ENCODE measurements at regions of chr1 and their contacts with region 1.

Region 1: DNA sequence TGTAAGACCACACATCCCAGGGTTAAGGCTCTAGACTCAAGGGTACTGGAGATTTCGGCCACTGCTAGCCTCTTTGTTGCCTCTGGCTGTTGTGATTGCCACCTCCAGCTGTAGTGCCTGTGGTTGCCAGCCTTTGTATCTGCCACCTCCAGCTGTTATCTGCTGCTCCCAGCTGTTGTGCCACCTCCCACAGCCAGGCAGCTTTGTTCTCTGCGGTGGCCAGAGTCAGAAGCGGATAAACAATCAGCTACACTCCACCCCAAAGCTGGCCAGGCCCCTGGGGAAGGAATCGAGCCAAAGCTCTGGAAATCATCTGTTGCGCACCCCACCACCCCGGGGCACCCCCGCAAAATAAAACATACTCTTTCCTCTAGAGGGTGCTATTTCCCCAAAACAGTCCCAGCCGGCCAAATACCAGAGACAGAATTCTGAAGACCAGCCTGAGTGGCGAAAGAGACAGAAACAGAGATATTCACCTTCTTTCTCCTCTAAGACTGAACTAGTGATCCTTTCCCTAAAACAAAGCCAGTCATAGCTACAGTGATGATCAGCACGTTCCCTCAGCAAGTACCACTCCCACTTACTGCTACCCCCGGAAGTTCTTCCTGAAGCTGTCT is 14.8 kb upstream of the PIGM start:
- DNase-seq: peak; percentile 82
- CTCF ChIP-seq: peak; percentile 67

Region 2: GRCh38 chr1:159999204-159999603 is 47.4 kb before region 1 on chr1:
- CTCF ChIA-PET with region 1: no interaction called
- POLR2A ChIA-PET with region 1: no interaction called
- DNase-seq: no peak
- CTCF ChIP-seq: no peak

Region 3: DNA sequence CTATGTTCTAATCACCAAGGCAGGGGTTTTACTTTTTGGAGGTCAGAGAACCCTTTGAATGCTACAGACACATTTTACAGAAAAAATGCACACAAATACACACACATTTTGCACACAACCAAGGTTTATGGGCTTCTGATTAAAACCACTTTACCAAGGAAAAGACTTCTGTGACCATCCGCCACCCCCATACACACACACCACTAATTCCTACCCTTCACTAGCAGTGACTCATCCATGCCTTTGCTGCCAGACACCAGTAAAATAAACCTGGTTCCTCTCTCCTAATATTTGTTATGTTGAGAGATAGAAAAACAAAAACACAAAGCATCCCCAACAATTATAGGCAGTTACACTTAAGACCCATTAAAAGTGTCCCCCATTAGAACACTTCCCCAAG is 27.7 kb before region 1 on chr1:
- CTCF ChIA-PET with region 1: interaction called, 11 read pairs
- POLR2A ChIA-PET with region 1: no interaction called
- DNase-seq: no peak
- CTCF ChIP-seq: no peak

Region 4: DNA sequence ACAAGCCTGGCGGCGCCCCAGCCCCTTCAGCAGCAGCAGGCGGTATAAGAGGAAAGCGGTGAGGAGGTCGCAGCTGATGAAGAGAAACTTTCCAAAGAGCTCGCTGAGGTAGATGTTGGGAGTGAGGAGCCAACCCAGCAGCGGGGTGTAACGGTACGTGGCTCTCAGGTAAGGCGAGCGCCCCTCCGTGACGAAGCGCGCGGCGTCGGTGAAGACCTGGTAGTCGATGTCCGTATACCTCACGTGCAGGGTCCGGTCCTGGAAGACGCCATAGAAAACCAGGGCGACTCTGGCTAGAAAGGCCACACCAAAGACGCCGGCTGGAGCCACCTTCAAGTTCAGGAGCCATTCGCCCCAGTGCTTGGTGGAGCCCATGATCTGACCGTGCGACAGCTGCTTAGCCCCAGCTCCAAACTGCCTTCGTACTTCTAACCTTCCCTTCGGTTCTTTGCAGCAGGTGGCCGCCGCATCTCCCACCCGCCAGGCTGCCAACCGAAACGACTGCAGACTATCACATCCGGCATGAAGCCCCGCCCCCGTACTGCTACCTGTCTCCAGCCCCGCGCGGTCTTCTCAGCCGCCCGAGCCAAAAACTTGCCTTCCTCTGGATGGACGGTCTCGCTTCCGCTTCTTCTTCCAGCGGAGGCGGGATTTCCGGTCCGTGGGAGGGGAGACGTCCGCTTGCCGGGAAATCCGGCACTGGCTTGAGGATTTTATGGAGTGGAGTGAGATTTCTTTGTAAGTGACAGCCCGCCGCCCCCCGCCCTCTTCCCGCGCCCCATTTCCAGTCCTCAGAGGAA is 15.0 kb before region 1 on chr1 and contains the start of gene PIGM:
- CTCF ChIA-PET with region 1: interaction called, 48 read pairs
- POLR2A ChIA-PET with region 1: no interaction called
- DNase-seq: peak; percentile 93
- CTCF ChIP-seq: no peak

Region 5: DNA sequence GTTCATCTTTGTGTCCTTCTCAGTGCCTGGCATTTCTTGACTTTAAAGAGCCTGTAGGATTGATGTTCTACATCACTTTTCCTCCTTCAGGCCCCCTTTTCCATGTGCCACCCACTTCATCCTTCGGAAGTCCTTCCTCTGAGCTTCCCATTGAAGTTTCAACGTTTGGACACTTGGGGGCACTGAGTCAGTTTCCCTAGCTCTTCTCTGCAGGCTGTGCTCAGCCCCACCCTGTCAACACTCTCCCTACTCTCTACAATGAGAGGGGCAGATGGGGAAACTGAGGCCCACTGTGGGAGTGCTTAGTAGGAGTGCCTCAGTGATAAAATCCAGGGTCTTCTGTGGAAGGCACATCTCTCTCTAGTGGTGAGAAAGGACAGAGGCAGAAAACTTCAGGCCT is 11.5 kb after region 1 on chr1:
- CTCF ChIA-PET with region 1: interaction called, 50 read pairs
- POLR2A ChIA-PET with region 1: no interaction called
- DNase-seq: no peak
- CTCF ChIP-seq: peak; percentile 18

Region 6: GRCh38 chr1:160069460-160070231 is 23.0 kb after region 1 on chr1 and contains the start of gene KCNJ10:
- CTCF ChIA-PET with region 1: interaction called, 983 read pairs
- POLR2A ChIA-PET with region 1: no interaction called
- DNase-seq: no peak
- CTCF ChIP-seq: no peak

Region 7: DNA sequence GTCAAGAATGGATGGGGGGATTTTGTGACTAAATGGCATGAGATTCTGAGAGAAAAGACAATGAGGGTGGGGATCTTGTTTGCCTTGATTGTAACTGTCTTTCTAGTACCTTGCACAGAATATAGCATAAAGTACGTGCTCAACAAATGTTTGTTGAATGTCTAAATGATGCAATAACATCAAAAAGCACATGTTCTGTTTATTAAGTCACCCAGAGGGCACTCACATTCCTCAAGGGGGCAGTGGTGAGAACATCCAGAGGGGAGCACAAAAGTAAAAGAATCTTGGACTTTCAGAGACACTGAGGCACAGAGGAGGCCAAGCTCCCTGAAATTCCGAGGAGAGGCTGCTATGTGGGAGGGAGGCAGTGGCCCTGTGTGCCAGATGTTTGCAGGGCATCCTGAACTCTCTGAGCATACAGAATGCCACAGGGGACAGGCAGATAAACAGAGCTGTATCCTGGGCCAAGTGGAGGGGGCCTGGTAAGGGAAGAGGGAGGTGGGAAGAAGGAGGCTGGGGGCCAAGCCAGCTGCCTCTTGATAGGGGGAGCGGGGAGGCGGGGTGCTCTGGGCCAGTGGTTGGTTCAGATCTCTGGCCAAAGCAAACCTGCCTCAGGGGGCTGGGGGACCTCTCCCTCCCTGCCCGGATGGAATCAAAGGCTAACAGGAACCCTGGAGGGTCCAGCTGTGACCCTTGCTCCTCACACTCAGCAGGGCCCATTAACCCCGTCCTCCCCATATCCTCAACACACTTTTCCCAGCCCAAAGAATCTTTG is 62.5 kb after region 1 on chr1:
- CTCF ChIA-PET with region 1: no interaction called
- POLR2A ChIA-PET with region 1: no interaction called
- DNase-seq: peak; percentile 60
- CTCF ChIP-seq: peak; percentile 35

Region 8: GRCh38 chr1:160161965-160162705 is 115.5 kb after region 1 on chr1:
- CTCF ChIA-PET with region 1: no interaction called
- POLR2A ChIA-PET with region 1: no interaction called
- DNase-seq: peak; percentile 41
- CTCF ChIP-seq: peak; percentile 46

Region 9: GRCh38 chr1:160460683-160461287 is 414.2 kb after region 1 on chr1:
- CTCF ChIA-PET with region 1: no interaction called
- POLR2A ChIA-PET with region 1: no interaction called
- DNase-seq: no peak
- CTCF ChIP-seq: no peak